ENCODE measurements at regions of chr3 and their contacts with region 1.

Region 1: DNA sequence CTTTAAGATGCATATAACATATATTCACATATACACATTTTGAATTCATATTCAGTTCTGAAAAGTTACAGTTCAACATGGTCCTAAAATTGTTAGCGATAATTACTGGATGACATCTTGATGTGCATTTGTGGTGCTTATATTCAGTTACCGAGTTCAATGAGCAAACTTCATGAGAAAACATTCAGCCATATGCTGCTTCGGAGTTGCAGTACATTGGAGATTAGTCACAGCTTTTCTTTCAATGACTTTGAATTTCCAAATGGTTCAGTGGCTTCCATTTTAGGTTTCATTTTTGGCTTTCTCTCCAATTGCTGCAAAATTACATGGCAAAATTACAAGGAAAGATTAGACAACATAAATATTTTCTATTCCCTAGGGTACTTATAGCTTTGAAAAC is 198.3 kb upstream of the CNTN3 start:
- DNase-seq: no peak
- ATAC-seq: no peak

Region 2: DNA sequence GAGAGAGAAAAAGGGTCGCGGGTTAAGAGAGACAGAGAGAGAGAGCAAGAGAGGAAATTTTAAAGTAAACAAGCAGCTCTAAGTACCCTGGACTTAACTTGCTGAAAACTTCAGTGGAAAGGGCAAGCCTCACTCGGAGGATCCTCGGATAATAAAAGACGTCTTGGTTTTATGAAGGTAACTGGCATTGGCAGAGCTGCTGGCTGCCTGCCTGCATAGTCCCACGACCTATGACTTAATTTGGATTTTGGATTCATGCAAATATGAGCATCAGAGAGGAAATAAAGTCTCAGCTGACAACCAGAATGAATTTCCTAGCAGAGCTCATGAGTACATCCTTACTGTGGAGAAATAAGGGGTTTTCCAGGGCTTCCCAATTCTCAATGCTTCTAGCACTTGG is 1092.9 kb before region 1 on chr3:
- intact Hi-C with region 1: loop called (anchors 5 kb)
- DNase-seq: no peak
- ATAC-seq: peak; percentile 57

Region 3: DNA sequence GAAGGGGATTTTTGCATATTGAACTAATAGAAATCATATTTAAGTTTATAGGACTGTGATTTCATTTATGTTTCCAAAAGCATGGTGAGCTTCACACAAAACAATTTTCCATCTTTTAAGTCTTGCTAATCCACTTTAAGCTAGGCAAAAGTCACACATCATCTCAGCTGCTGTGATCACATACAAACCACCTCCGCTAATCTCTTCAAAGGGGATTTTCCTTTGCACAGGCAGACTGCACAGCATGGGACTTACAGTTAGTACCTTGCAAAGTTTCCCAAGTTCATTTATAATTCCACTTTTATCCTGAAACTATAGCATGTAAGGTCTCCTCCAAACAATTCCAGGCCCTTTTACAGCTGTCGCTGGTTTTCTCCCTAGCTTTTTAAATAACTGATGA is 26.8 kb after region 1 on chr3:
- intact Hi-C with region 1: no loop called
- DNase-seq: no peak
- ATAC-seq: no peak

Measured in sciatic nerve (tissue), 2 donors.